ENCODE measurements at regions of chr13 and their contacts with region 1.

Region 1: GRCh38 chr13:40329657-40330485 is 336.6 kb downstream of the FOXO1 start:
- DNase-seq: no peak
- ATAC-seq: peak in 1 of 4 donors; percentile 28
- H3K4me3 ChIP-seq: no peak overlapping the region
- H3K27ac ChIP-seq: no peak overlapping the region
- H3K4me1 ChIP-seq: no peaks in the 10 kb centered on the region
- H3K27me3 ChIP-seq: no peaks in the 10 kb centered on the region
- CTCF ChIP-seq: no peak
- POLR2A ChIP-seq: no peak

Region 2: GRCh38 chr13:40251343-40252032 is 78.4 kb before region 1 on chr13:
- intact Hi-C with region 1: loop called in 1 of 2 experiments (anchors 10 kb)
- DNase-seq: no peak
- ATAC-seq: peak in 3 of 4 donors; percentile 26 to 46 (median 34)
- H3K4me3 ChIP-seq: no peak overlapping the region
- H3K27ac ChIP-seq: no peak overlapping the region
- H3K4me1 ChIP-seq: no peaks in the 10 kb centered on the region
- H3K27me3 ChIP-seq: no peaks in the 10 kb centered on the region
- CTCF ChIP-seq: no peak
- POLR2A ChIP-seq: no peak

Measured in right lobe of liver (tissue), 6 donors.